Naive thymus-derived CD8-positive, alpha-beta T cell (primary cell): ENCODE measurements at regions of chr9 and their contacts with region 1.

Region 1: GRCh38 chr9:127899128-127899946 is at the start of gene ST6GALNAC6:
- DNase-seq: peak in 9 of 10 donors; percentile 30 to 75 (median 60)
- ATAC-seq: peak; percentile 73 to 79
- H3K4me3 Mint-ChIP-seq: peak within 1 kb of the TSS; percentile 79 to 93 (median 88)
- H3K27ac Mint-ChIP-seq: peak within 1 kb of the TSS; percentile 80 to 94 (median 88)
- H3K4me1 Mint-ChIP-seq: peaks cover 17 to 46% (median 42%) of the 10 kb centered on the region in 4 donors
- H3K27me3 Mint-ChIP-seq: no peaks in the 10 kb centered on the region
- polyA plus RNA-seq, gene ST6GALNAC6: 29.8 to 42.8 (median 30.3) TPM

Region 2: GRCh38 chr9:127854184-127854806 is 45.0 kb before region 1 on chr9 and contains the start of gene ENG:
- POLR2A ChIA-PET with region 1: no interaction called
- DNase-seq: peak in 1 of 10 donors; percentile 18
- ATAC-seq: peak; percentile 66 to 74
- H3K4me3 Mint-ChIP-seq: peak within 1 kb of the TSS; percentile 81 to 92 (median 88)
- H3K27ac Mint-ChIP-seq: peak within 1 kb of the TSS; percentile 71 to 94 (median 88)
- H3K4me1 Mint-ChIP-seq: peaks cover 13 to 58% (median 40%) of the 10 kb centered on the region in 4 donors
- H3K27me3 Mint-ChIP-seq: no peaks in the 10 kb centered on the region
- polyA plus RNA-seq, gene ENG: 2.1 to 5.4 (median 4.4) TPM

Region 3: GRCh38 chr9:127877566-127877998 is 21.8 kb before region 1 on chr9 and contains the start of gene AK1:
- POLR2A ChIA-PET with region 1: interaction called, 21 read pairs
- DNase-seq: no peak
- ATAC-seq: no peak
- H3K4me3 Mint-ChIP-seq: peak within 1 kb of the TSS in 8 of 10 donors; percentile 8 to 60 (median 56)
- H3K27ac Mint-ChIP-seq: peak within 1 kb of the TSS in 5 of 10 donors; percentile 18 to 61 (median 29)
- H3K4me1 Mint-ChIP-seq: peaks cover 9 to 18% (median 12%) of the 10 kb centered on the region in 4 donors
- H3K27me3 Mint-ChIP-seq: peaks cover 0 to 12% (median 0%) of the 10 kb centered on the region in 5 donors
- polyA plus RNA-seq, gene AK1: 0.07 to 0.22 TPM in 2 of 3 donors, not detected in the other

Region 4: DNA sequence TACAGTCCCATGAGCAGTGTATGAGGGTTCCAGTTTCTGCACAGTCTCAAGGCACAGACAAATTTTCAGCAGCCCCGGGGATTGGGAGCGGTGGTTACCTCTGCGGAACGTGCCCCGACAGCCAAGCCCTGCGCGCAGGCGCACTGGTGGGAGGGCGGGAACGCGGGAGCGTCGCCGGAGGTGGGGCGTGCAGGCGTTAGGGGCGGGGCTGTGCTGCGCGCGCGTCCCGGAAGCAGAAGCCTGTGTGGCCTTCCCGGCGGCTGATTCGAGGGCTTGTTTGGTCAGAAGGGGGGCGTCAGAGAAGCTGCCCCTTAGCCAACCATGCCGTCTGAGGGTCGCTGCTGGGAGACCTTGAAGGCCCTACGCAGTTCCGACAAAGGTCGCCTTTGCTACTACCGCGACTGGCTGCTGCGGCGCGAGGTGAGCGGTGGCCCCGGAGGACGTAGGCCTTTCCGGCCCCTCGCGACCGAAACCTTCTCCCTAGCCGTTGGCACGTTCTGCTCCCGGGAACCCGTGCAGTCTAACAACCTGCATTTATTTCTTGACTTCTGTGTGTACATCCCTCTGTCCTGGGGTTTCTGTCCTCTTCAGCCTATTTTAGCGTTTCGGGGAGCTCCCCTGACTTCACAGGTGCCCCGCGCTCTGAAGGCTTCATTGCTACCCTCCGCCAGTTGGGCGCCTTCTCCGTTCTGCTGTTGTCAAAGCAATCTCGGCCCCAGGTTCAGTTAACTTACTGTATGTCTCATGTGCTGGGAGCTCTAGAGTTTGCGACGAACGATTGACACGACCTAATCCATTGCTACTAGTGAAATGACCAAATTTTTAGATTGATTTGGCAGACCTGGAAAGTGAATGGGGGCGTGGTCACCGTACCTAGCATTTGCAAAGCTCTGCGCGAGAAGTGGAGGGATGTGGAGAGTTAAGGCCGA is 605.4 kb after region 1 on chr9 and contains the start of gene GLE1:
- POLR2A ChIA-PET with region 1: no interaction called
- DNase-seq: peak; percentile 92 to 100 (median 97)
- ATAC-seq: peak; percentile 89 to 91
- H3K4me3 Mint-ChIP-seq: peak within 1 kb of the TSS; percentile 94 to 100 (median 100)
- H3K27ac Mint-ChIP-seq: peak within 1 kb of the TSS; percentile 94 to 99 (median 99)
- H3K4me1 Mint-ChIP-seq: peaks cover 9 to 41% (median 34%) of the 10 kb centered on the region in 4 donors
- H3K27me3 Mint-ChIP-seq: no peaks in the 10 kb centered on the region
- polyA plus RNA-seq, gene GLE1: 17.4 to 27.9 (median 24.9) TPM